ENCODE measurements at regions of chr11 and their contacts with region 1.

Region 1: GRCh38 chr11:110200241-110200640 is 96.2 kb downstream of the RDX start:
- DNase-seq: no peak

Region 2: GRCh38 chr11:109946322-109946846 is 253.9 kb before region 1 on chr11:
- intact Hi-C with region 1: loop called (anchors 10 kb)
- DNase-seq: peak; percentile 85

Region 3: DNA sequence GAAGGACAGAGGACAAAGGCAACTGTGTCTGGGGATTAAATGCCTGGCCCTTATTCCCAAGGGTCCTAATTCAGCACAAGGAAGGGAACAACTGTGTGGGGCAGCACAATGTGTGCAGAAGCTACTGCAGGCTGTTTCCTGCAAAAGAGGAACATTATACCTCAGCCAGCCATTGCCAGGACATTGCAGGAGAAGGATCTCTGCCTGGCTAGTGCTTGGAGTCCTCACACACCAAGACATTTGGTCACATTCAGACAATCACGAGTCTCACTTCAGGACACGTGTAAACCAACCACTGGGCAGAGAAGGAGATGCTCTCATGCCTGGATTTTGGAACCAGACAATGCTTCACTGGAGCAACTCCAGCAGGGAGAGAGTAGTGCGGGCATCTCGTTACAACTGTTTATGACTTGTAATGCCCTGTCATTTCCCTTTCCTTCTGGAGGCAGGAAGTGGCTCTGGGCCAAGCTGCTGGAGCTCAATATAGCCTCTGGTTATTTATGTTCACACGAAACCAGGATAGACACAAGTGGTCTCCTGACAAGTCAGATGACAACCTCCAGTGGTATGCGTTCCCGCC is 131.0 kb before region 1 on chr11:
- intact Hi-C with region 1: no loop called
- DNase-seq: no peak

Region 4: DNA sequence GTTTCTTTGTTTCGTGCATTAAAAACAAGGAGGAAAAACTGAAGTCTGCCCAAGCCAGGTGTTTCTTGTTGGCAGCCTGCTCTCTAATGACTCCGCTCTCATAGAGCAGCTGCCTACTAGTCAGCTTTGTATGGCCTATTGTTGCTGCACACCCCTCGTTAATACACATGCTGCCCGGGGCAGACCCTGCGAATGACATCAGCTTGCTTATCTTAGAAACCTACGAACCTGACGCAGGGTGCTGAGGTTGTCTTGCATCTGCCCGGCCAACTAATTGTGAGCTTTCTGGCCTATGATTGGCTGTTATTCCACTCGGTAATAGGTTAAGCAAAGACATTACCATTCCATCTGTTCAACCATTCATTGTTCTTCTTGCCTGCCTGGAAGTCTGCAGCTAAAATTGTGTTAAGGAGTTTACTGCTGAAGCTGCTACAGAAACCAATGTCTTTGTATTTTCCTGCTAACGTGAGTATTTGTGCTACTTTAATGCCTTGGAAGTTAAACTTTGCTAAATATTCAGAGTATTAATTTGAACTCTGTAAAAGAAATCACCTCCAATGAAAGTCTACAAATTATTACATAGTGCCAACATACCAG is 69.5 kb before region 1 on chr11:
- intact Hi-C with region 1: no loop called
- DNase-seq: no peak

Region 5: DNA sequence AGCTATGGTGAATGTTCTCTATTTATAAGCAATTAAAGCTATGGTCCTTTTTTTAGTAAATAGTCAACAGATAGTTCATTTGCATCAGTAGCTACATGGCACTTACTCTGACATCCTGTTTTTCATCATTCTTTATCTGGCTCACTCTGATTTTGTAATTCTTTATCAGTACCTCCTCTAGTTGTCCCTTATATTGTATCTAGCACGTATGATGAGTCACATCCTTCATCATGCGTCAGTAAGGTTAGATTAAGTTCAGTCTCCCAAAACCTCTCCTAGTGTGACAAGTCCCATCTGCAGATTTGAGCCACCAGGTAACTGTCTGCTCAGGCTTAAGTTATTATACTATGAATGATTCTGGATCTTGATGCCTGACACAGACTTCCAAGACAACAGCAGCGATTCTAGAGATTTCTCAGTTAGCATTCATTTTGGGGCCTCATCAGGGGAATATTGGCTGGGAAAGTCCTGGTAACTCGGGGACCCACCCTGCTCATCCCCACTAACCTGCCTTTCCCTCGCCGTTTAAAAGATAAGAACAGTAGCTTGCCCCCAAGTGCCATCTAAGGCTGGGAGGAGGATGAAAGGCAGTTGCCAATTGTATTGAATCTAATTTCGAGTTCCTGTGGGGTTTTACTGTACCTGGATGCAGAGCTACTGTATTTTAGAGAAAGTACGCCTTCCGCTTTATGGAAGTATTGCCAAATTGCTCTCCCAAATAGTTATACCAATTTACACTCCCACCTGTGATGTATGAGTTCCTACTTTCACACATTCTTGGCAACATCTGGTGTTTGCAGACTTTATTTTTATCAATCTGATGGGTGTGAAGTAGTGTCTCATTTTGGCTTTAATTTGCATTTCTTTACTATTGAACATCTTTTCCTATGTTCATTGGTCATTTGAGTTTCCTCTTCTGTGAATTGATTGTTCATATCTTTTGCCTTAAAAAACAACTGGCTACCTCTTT is 51.2 kb before region 1 on chr11:
- intact Hi-C with region 1: no loop called
- DNase-seq: no peak

Region 6: GRCh38 chr11:110362971-110363509 is 162.8 kb after region 1 on chr11:
- intact Hi-C with region 1: loop called (anchors 1 kb)
- DNase-seq: no peak

Region 7: DNA sequence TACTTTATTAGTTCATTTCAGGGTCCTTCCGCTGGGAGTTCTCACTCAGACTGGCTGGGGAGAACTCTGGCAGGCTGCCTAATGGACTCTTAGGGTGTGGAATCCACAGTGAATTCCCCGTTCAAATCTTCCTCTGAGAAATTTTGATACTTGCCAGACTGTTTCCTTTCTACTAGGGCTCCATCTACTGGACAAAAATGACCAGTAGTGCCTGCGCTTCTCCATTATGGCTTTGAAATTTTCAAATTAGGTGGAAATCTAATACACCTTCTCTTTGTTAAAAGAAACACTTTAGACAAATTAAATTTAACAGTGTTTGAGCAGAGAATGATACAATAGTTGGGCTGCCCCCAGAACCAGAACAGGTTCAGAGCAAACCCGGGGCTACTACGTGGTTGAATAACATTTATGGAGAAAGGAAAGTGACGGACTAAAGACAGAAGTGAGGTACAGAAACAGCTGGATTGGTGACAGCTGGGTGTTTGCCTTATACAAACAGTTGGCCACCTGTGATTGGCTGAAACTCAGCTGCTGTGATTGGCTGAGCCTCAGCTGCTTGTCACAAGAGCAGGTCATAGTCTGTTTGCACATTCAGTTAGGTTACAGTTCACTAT is 176.6 kb after region 1 on chr11:
- intact Hi-C with region 1: loop called (anchors 2 kb)
- DNase-seq: no peak

Region 8: GRCh38 chr11:110429731-110430266 is 229.6 kb after region 1 on chr11 and contains the start of gene FDX1:
- intact Hi-C with region 1: loop called (anchors 5 kb)
- DNase-seq: peak; percentile 92
- total RNA-seq, gene FDX1: 21.7 TPM

Region 9: GRCh38 chr11:111230122-111230465 is 1029.9 kb after region 1 on chr11:
- intact Hi-C with region 1: loop called (anchors 10 kb)
- DNase-seq: no peak